MCF 10A (cell line): ENCODE measurements at regions of chr22 and their contacts with region 1.

Region 1: GRCh38 chr22:17501679-17502285 is 61.5 kb upstream of the SLC25A18 start:
- DNase-seq: peak; percentile 79
- H3K4me3 Mint-ChIP-seq: no peak overlapping the region
- H3K27ac Mint-ChIP-seq: no peak overlapping the region
- H3K4me1 Mint-ChIP-seq: peaks cover 13% of the 10 kb centered on the region
- H3K27me3 Mint-ChIP-seq: no peaks in the 10 kb centered on the region
- CTCF ChIP-seq: peak; percentile 76

Region 2: GRCh38 chr22:17057959-17058814 is 443.6 kb before region 1 on chr22:
- CTCF ChIA-PET with region 1: interaction called, 21 read pairs
- POLR2A ChIA-PET with region 1: interaction called, 3 read pairs
- intact Hi-C with region 1: no loop called
- DNase-seq: peak; percentile 79
- H3K4me3 Mint-ChIP-seq: no peak overlapping the region
- H3K27ac Mint-ChIP-seq: peak overlapping the region; percentile 24
- H3K4me1 Mint-ChIP-seq: peaks cover 5% of the 10 kb centered on the region
- H3K27me3 Mint-ChIP-seq: no peaks in the 10 kb centered on the region
- CTCF ChIP-seq: peak; percentile 88

Region 3: GRCh38 chr22:17084554-17085276 is 417.1 kb before region 1 on chr22 and contains the start of gene IL17RA:
- CTCF ChIA-PET with region 1: interaction called, 22 read pairs
- POLR2A ChIA-PET with region 1: no interaction called
- intact Hi-C with region 1: no loop called
- DNase-seq: peak; percentile 92
- H3K4me3 Mint-ChIP-seq: peak within 1 kb of the TSS; percentile 84
- H3K27ac Mint-ChIP-seq: peak within 1 kb of the TSS; percentile 88
- H3K4me1 Mint-ChIP-seq: peaks cover 14% of the 10 kb centered on the region
- H3K27me3 Mint-ChIP-seq: no peaks in the 10 kb centered on the region
- CTCF ChIP-seq: no peak
- total RNA-seq, gene IL17RA: 11.5 and 11.9 TPM in 2 replicates

Region 4: GRCh38 chr22:17205432-17205831 is 296.4 kb before region 1 on chr22:
- CTCF ChIA-PET with region 1: interaction called, 29 read pairs
- POLR2A ChIA-PET with region 1: no interaction called
- intact Hi-C with region 1: loop called (anchors 1 kb)
- DNase-seq: no peak
- H3K4me3 Mint-ChIP-seq: no peak overlapping the region
- H3K27ac Mint-ChIP-seq: no peak overlapping the region
- H3K4me1 Mint-ChIP-seq: no peaks in the 10 kb centered on the region
- H3K27me3 Mint-ChIP-seq: peaks cover 13% of the 10 kb centered on the region
- CTCF ChIP-seq: no peak

Region 5: GRCh38 chr22:17258015-17258787 is 243.6 kb before region 1 on chr22:
- CTCF ChIA-PET with region 1: interaction called, 12 read pairs
- POLR2A ChIA-PET with region 1: no interaction called
- intact Hi-C with region 1: no loop called
- DNase-seq: no peak
- H3K4me3 Mint-ChIP-seq: no peak overlapping the region
- H3K27ac Mint-ChIP-seq: no peak overlapping the region
- H3K4me1 Mint-ChIP-seq: no peaks in the 10 kb centered on the region
- H3K27me3 Mint-ChIP-seq: no peaks in the 10 kb centered on the region
- CTCF ChIP-seq: no peak

Region 6: GRCh38 chr22:17562906-17563870 is 61.4 kb after region 1 on chr22 and contains the start of gene SLC25A18:
- CTCF ChIA-PET with region 1: interaction called, 11 read pairs
- POLR2A ChIA-PET with region 1: no interaction called
- intact Hi-C with region 1: no loop called
- DNase-seq: no peak
- H3K4me3 Mint-ChIP-seq: no peak within 1 kb of the TSS
- H3K27ac Mint-ChIP-seq: no peak within 1 kb of the TSS
- H3K4me1 Mint-ChIP-seq: peaks cover 11% of the 10 kb centered on the region
- H3K27me3 Mint-ChIP-seq: no peaks in the 10 kb centered on the region
- CTCF ChIP-seq: no peak
- total RNA-seq, gene SLC25A18: 0.15 and 0.35 TPM in 2 replicates